ENCODE measurements at regions of chr6 and their contacts with region 1.

Region 1: GRCh38 chr6:160534050-160534696 is 129.9 kb downstream of the LPA start:
- DNase-seq: peak; percentile 70
- H3K4me3 ChIP-seq: peak overlapping the region in 2 of 4 donors; percentile 21 to 22
- H3K27ac ChIP-seq: no peak overlapping the region
- H3K4me1 ChIP-seq: peaks cover 0 to 7% (median 2%) of the 10 kb centered on the region in 4 donors
- H3K27me3 ChIP-seq: no peaks in the 10 kb centered on the region
- CTCF ChIP-seq: peak; percentile 71 to 93 (median 81)
- EP300 ChIP-seq: no peak
- POLR2A ChIP-seq: no peak

Region 2: GRCh38 chr6:160367798-160368547 is 166.2 kb before region 1 on chr6:
- intact Hi-C with region 1: no loop called
- DNase-seq: no peak
- H3K4me3 ChIP-seq: no peak overlapping the region
- H3K27ac ChIP-seq: no peak overlapping the region
- H3K4me1 ChIP-seq: no peaks in the 10 kb centered on the region
- H3K27me3 ChIP-seq: no peaks in the 10 kb centered on the region
- CTCF ChIP-seq: no peak
- EP300 ChIP-seq: no peak
- POLR2A ChIP-seq: no peak

Region 3: DNA sequence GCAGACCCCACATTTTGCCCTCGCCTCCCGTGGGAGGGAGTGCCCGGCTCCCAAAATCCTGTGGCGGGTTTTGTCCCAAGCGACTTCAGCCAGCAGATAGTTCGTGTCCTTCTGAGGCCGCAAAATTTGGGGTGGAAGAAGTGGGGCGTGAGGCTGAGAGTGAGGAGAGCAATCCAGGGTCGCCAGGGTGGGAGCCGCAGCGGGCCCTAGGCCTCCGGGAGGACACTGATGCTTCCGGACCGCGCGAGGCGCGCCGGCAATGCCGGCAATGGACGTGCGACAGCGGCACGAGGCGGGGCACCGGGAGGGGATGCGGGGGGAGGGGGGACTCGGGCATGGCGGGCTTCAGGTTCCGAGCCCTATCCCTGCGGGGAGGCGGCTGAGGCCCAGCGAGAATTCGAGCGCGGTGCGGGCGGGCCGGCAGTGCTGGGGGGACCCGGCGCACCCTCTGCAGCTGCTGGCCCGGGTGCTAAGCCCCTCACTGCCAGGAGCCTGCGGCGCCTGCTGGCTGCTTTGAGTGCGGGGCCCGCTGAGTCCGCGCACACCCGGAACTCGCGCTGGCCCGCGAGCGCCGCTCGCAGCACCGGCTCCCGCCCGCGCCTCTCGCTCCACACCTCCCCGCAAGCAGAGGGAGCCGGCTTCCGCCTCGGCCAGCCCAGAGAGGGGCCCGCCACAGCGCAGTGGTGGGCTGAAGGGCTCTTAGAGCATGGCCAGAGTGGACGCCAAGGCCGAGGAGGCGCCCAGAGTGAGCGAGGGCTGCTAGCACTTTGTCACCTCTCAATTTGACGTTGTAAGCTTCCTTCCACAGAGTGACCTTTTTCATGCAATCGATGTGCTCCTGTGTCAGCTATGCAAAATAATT is 13.9 kb before region 1 on chr6:
- intact Hi-C with region 1: loop called (anchors 1 kb)
- DNase-seq: peak; percentile 86
- H3K4me3 ChIP-seq: peak overlapping the region; percentile 68 to 81 (median 76)
- H3K27ac ChIP-seq: peak overlapping the region; percentile 82 to 88 (median 83)
- H3K4me1 ChIP-seq: peaks cover 0 to 11% (median 5%) of the 10 kb centered on the region in 4 donors
- H3K27me3 ChIP-seq: no peaks in the 10 kb centered on the region
- CTCF ChIP-seq: peak in 2 of 4 experiments; percentile 1 to 84
- EP300 ChIP-seq: no peak
- POLR2A ChIP-seq: no peak

Region 4: DNA sequence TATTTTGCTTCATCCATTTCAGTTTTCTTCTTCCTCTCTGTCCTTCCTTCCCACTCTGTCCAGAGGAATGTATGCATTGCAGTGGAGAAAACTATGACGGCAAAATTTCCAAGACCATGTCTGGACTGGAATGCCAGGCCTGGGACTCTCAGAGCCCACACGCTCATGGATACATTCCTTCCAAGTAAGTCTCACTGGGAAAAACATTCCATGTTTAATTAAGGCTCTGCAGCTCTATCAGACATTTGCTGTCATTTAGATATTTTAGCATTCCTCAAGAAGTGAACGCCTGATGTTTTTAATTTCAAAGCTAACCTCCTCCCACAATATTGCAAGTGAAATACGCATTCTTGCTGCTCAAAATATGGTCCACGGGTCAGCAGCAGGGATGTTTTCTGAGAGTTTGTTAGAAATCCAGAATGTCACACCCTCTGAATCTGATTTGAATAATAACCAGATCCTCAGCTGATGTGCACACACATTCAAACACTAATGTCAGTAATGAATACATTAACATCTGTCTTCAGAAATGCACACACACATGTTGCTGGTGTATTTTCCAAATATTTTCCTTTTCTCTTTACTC is 180.7 kb after region 1 on chr6:
- intact Hi-C with region 1: no loop called
- DNase-seq: no peak
- H3K4me3 ChIP-seq: no peak overlapping the region
- H3K27ac ChIP-seq: no peak overlapping the region
- H3K4me1 ChIP-seq: peaks cover 0 to 8% (median 0%) of the 10 kb centered on the region in 4 donors
- H3K27me3 ChIP-seq: no peaks in the 10 kb centered on the region
- CTCF ChIP-seq: no peak
- EP300 ChIP-seq: no peak
- POLR2A ChIP-seq: no peak